ENCODE measurements at regions of chr20 and their contacts with region 1.

Region 1: GRCh38 chr20:56343861-56344381 is 14.9 kb upstream of the FAM210B start:
- DNase-seq: no peak
- H3K4me3 ChIP-seq: no peak overlapping the region
- CTCF ChIP-seq: no peak
- POLR2A ChIP-seq: no peak

Region 2: GRCh38 chr20:56202493-56203077 is 141.3 kb before region 1 on chr20:
- intact Hi-C with region 1: loop called (anchors 5 kb)
- DNase-seq: no peak
- H3K4me3 ChIP-seq: no peak overlapping the region
- CTCF ChIP-seq: no peak
- POLR2A ChIP-seq: no peak